Posterior cingulate gyrus (tissue), 11 donors: ENCODE measurements at regions of chr21 and their contacts with region 1.

Region 1: DNA sequence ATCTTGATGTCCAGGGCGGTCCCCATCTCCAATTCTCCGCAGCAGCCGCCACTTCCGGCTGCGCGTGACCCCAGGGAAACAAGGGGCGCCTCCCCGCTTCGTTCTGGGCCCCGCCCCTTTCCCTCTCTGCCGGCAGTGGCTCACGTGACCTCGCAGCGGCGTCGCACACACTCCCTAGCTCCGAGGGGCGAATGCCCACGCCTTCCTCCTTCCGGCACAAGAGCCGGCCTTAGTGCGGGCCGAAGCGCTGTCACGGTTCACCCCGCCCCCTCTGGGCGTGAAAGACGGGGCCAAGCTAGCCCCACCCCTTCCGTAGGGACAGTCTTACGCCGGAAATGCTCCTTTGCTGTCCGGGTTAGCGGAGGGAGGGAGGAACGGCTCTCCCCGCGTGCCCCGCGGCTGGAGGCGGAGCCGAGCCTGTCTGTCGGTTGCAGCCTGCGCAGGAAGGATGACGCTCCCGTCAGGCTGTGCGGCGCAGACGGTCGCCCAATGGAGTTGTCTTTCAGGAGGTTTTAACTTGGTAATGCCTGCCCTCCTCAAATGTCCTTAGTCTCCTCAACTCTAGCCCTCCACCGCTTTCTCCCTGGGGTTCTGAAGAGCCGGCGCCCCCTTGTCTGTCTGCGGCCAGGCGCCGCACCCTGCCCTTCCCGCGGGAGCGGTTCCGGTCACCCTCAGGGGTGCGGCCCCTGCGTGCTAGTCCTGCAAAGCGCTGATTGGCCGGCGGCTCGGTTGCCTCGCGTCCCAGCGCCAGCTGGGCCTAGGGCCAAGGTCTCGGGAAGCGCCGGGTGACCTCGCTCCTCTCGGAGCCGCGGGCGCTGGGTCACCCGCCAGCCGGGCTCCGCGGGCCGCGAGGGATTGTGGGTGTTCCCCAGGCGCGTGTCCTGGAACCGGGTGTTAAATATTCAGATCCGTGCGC is at the start of gene VPS26C:
- DNase-seq: peak; percentile 93 to 100 (median 98)

Region 2: GRCh38 chr21:37072988-37073416 is 194.5 kb before region 1 on chr21 and contains the starts of genes PIGP and TTC3:
- intact Hi-C with region 1: loop called (anchors 5 kb)
- DNase-seq: peak; percentile 91 to 99 (median 95)

Region 3: DNA sequence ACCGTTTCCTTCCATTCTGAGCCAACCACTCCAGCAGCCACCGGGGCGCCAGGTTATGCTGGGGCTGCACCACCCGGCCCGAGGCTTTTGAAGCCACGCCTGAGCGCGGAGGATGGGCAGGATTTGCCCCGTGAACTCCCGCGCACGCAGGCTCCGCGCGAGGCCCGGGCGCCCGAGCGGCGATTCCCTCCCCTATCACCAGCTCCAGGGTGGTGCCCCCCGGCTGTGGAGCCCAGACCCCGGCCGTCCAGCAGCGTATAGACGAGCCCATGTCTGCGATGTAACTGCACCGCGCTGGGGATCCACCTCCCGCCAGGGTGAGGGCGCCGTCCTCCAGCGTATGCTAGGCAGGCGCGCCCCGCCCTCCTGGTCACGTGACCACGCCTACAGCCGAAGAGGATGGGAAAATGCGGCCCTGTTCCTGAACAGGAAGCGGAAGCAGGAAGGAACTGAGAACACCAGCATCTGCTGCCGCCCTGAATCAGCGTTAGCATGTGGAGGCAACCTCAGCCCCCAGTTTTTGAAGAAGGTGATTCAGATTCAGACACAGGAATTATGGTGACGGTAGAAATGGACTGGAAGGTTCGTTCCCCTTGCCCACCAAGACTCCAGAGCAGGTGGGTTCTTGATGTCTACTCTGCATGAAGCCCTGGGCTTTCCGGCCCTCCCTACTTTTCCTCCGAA is 46.4 kb before region 1 on chr21:
- intact Hi-C with region 1: loop called (anchors 5 kb)
- DNase-seq: peak; percentile 83 to 99 (median 95)

Region 4: GRCh38 chr21:37452227-37452626 is 184.7 kb after region 1 on chr21:
- intact Hi-C with region 1: loop called (anchors 10 kb)
- DNase-seq: peak in 7 of 10 donors; percentile 27 to 88 (median 54)

Region 5: DNA sequence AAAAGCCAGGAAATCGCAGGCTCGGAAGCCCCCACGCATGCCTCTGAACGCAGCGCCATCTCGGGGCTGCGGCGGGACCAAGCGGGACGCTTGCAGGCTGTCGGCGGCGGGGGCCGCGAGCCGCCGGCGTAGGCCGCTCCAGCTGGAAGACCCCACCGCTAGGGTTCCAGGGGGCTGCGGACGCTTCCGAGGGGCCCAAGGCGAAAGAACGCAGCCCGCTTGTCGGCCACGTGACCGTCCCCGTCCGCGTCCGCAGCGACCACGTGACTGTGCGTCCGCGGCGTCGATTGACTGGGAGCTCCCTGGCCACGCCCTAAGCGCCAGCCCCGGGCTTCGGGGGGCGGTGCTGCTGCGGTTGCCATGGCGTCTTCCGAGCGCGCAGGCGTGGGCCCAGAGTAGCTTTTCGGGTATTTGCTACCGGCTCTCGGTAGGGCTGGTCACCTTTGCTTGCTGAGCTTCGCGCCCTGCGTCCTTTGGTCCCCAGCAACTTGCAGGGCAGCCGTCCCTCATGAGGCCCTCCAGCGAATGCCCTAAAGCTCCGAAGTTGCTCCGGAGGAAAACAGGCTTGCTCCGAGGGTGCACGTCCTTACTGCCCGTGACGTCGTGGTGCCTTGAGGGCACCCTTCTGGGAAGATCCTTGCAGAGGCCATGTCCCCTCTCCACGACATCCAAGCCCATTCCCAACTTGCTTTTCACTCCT is 296.3 kb after region 1 on chr21:
- intact Hi-C with region 1: loop called (anchors 5 kb)
- DNase-seq: peak; percentile 86 to 99 (median 96)